HCT116 (cell line): ENCODE measurements at regions of chrX and their contacts with region 1.

Region 1: GRCh38 chrX:21985332-21985777 is 44.8 kb downstream of the SMS start:
- DNase-seq: peak; percentile 26
- ATAC-seq: peak; percentile 92
- H3K4me3 ChIP-seq: no peak overlapping the region
- H3K27ac ChIP-seq: no peak overlapping the region
- H3K4me1 ChIP-seq: no peaks in the 10 kb centered on the region
- H3K27me3 ChIP-seq: no peaks in the 10 kb centered on the region
- CTCF ChIP-seq: peak; percentile 70 to 91 (median 74)
- POLR2A ChIP-seq: no peak
- RAD21 ChIP-seq: peak; percentile 68

Region 2: GRCh38 chrX:21781525-21781924 is 203.8 kb before region 1 on chrX:
- CTCF ChIA-PET with region 1: no interaction called
- POLR2A ChIA-PET with region 1: no interaction called
- RAD21 ChIA-PET with region 1: no interaction called
- intact Hi-C with region 1: no loop called
- DNase-seq: no peak
- ATAC-seq: no peak
- H3K4me3 ChIP-seq: no peak overlapping the region
- H3K27ac ChIP-seq: no peak overlapping the region
- H3K4me1 ChIP-seq: no peaks in the 10 kb centered on the region
- H3K27me3 ChIP-seq: no peaks in the 10 kb centered on the region
- CTCF ChIP-seq: no peak
- POLR2A ChIP-seq: no peak
- RAD21 ChIP-seq: no peak

Region 3: DNA sequence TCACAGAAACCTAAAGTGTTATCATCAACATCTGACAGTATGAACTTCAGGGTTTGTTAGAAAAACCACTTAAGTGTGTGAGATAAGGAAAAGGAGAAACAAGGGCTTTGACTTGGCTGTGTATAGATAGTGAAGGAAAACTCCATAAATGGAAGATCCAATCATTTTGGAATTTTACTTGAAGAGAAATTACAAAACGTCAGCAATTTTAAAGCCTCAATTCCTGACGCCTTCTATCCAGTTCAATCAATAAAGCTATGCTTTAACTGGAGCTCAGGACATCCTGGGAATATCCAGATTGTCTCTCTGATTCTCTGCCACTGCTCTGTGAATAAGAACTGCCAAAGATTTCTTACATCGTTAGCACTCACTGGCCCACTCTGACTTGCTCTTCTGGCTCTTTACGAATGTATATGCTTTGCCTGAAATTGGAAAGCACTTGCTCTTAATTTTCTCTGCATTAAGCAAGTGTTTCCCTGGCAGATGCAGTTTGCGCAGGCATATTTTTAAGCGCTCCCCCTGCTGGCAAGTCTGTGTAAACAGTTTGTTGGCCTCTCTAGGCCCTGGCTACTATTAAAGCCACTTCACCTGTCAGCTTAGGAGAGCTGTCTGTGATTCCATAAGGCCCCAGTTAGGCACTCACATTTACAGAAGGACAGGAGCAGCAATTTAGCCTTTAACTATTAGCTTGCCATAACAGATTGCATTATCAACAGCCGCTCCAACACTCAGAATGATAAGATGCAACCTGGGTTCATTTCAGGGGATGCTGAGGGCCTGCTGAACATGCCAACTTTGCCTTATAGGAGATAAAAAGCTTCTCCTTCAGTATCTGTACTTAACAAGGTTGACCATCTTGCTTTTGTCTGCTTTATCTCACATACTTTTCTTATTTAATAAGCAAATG is 763.0 kb after region 1 on chrX:
- CTCF ChIA-PET with region 1: interaction called, 5 read pairs
- POLR2A ChIA-PET with region 1: no interaction called
- RAD21 ChIA-PET with region 1: no interaction called
- intact Hi-C with region 1: loop called (anchors 5 kb)
- DNase-seq: peak; percentile 19
- ATAC-seq: peak; percentile 82
- H3K4me3 ChIP-seq: no peak overlapping the region
- H3K27ac ChIP-seq: no peak overlapping the region
- H3K4me1 ChIP-seq: no peaks in the 10 kb centered on the region
- H3K27me3 ChIP-seq: no peaks in the 10 kb centered on the region
- CTCF ChIP-seq: peak; percentile 31 to 61 (median 49); a peak in 5 of 6 replicates
- POLR2A ChIP-seq: no peak
- RAD21 ChIP-seq: peak; percentile 60

Region 4: DNA sequence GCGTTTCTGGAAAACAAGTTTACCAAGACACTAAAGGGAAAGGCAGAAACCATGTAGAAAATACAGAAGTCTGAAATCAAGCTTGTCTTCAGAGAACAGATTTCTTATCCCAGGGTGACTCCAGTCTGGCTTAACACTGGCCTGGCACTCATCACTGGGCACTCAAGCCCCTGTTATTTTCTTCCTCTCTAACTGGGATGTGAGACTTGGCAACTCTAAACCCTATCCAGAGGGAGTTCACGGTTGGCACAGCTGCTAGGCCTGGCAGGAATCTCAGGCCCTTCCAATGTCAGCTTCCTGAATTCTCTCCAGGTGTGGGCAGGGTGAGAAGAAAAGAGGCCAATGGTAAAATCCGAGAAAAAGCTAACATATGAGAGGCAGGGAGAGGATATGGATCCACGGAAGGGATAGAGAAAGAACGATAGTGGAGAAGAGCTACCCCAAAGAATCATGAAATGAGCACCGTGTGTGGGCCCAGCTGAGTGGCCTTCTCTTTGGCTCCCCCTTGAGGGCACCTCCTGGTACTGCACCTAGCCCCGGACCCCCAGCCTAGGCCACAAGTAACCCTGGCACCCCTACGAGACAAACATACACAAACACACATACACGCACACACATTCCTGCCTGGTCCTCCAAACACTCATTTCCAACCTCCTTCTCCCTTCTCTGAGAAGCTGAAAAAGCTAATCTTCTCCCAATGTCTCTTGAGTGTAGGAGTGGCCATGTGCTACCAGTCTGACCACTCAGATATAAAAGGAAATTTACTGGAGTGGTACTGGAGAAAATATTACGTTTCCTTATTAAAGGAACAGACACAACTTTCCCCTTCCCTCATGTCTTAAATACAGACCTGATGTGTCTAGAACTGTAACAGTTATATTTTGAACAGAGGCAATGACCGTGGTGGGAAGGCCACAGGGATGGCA is 1332.7 kb after region 1 on chrX:
- CTCF ChIA-PET with region 1: no interaction called
- POLR2A ChIA-PET with region 1: no interaction called
- RAD21 ChIA-PET with region 1: no interaction called
- intact Hi-C with region 1: loop called (anchors 5 kb)
- DNase-seq: no peak
- ATAC-seq: peak; percentile 86
- H3K4me3 ChIP-seq: no peak overlapping the region
- H3K27ac ChIP-seq: no peak overlapping the region
- H3K4me1 ChIP-seq: no peaks in the 10 kb centered on the region
- H3K27me3 ChIP-seq: no peaks in the 10 kb centered on the region
- CTCF ChIP-seq: peak; percentile 39 to 84 (median 73); a peak in 5 of 6 replicates
- POLR2A ChIP-seq: no peak
- RAD21 ChIP-seq: peak; percentile 59

Region 5: DNA sequence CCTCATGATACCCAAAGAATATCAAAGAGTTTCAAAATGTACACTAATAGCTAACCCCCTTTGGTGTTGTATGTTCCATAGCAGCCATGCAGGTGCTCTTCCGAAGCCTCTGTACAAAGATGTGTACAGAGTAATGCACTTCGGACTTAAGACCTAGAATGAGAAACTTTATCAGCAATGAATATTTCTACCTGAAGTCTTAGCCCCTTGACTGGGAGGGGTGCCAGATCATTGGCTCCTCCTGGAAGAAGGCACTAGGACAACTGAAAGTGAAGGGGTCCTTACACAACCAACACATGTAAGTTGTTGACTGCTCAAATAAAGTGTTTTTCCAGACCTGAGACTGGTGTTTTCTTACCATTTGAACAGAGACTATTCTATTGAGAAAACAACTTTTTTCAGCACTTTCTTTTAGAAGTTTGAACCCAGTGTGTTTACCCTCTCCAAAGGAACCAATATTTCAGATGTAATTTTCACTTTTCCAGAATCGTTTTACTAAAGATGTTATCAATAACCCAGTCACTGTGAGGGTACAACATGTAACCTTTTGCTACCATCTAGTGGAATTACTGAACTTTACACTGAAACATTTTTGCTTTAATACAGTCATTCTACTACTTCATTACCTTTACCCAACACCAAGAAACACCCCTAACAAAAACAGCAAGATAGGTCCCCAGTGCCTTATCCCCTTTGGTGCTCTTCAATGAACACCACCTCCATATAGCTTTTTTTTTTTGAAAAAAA is 1648.7 kb after region 1 on chrX:
- CTCF ChIA-PET with region 1: no interaction called
- POLR2A ChIA-PET with region 1: no interaction called
- RAD21 ChIA-PET with region 1: no interaction called
- intact Hi-C with region 1: loop called (anchors 5 kb)
- DNase-seq: no peak
- ATAC-seq: peak; percentile 52; the same call in 1 of the 2 replicates
- H3K4me3 ChIP-seq: no peak overlapping the region
- H3K27ac ChIP-seq: no peak overlapping the region
- H3K4me1 ChIP-seq: no peaks in the 10 kb centered on the region
- H3K27me3 ChIP-seq: no peaks in the 10 kb centered on the region
- CTCF ChIP-seq: peak; percentile 3 to 41 (median 10); a peak in 2 of 6 replicates
- POLR2A ChIP-seq: no peak
- RAD21 ChIP-seq: peak; percentile 59